Psoas muscle (tissue), 8 donors: ENCODE measurements at regions of chr10 and their contacts with region 1.

Region 1: GRCh38 chr10:79400146-79401004 is 45.0 kb downstream of the ZCCHC24 start:
- DNase-seq: peak; percentile 51 to 74
- ATAC-seq: peak in 2 of 4 donors; percentile 29 to 34
- H3K4me3 ChIP-seq: peak overlapping the region; percentile 22
- H3K27ac ChIP-seq: peak overlapping the region; percentile 86
- H3K4me1 ChIP-seq: peaks cover 98% of the 10 kb centered on the region
- H3K27me3 ChIP-seq: no peaks in the 10 kb centered on the region
- CTCF ChIP-seq: peak; percentile 61

Region 2: DNA sequence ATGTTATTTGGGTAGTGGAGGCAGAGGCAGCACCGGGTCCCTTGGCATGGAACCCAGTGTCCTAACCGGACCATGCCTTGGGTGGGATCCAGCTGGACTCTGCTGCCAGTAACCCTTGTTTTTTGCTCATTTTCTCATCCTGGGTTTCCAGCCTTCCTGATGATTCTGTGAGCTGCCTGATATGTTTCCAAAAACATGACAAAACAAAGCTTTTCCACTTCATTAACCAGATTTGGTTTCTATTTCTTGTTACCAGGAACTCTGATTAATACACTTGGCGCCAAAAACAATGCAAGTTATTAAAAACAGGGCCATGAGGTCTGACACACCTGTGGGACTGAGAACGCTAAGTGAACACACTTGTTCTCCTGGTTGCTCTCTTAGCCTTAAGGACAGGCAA is 1441.0 kb before region 1 on chr10:
- intact Hi-C with region 1: no loop called
- DNase-seq: no peak
- ATAC-seq: no peak
- H3K4me3 ChIP-seq: no peak overlapping the region
- H3K27ac ChIP-seq: no peak overlapping the region
- H3K4me1 ChIP-seq: no peaks in the 10 kb centered on the region
- H3K27me3 ChIP-seq: no peaks in the 10 kb centered on the region
- CTCF ChIP-seq: no peak

Region 3: DNA sequence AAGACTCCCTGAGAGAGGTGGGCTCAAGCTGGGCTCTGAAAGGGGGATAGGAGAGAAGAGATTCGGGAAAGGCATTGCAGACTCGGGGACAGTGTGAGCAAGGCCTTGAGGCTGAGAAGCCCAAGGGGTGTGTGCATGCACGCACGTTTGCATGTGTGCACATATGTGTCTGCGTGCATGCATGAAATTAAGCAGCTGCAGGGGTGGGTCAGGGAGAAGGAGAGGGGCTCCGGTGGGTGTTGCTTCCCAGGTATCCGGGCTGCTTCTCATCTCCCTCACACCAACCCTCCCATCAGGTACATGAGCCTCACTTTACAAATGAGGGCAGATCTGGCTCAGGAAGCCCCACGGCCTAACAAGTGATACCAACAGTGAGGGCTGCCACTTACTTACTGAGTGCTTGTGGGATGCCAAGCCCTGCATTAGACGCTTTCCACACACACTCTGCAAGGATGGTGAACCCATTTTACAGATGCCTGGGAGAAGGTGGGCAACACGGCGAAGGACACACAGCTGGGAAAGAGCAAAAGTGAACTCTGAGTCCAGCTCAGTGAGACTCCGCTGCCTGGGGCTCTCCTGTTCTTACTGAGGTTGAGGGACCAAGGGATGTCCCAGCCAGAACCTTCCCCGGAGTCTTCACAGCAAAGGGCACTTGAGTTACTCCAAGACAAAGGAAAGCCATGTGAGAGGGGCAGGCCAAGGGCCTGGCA is 18.7 kb after region 1 on chr10:
- intact Hi-C with region 1: loop called in 1 of 2 experiments (anchors 1 kb)
- DNase-seq: peak in 1 of 2 donors; percentile 17
- ATAC-seq: no peak
- H3K4me3 ChIP-seq: no peak overlapping the region
- H3K27ac ChIP-seq: no peak overlapping the region
- H3K4me1 ChIP-seq: peaks cover 67% of the 10 kb centered on the region
- H3K27me3 ChIP-seq: no peaks in the 10 kb centered on the region
- CTCF ChIP-seq: no peak

Region 4: DNA sequence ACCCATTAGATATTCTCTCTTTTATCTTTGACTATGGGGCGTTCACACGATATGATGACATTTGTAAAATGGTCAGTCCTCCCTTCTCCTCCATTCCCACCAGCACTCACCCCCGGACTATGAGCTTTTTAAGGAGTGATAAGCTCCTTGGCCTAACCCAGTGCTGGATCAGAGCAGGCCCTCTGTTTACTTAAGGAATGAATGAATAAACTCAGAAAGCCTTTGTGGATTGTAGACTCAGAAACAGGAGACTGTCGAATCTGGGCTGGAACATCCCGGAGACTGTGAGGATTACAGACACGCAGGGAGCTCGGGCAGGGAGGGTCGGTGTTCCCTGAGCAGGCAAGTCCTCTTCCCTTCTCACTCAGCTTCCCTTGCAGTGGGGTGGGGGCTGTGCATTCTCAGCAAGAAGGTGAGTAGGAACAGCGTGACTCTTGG is 51.8 kb after region 1 on chr10:
- intact Hi-C with region 1: no loop called
- DNase-seq: no peak
- ATAC-seq: no peak
- H3K4me3 ChIP-seq: no peak overlapping the region
- H3K27ac ChIP-seq: no peak overlapping the region
- H3K4me1 ChIP-seq: peaks cover 23% of the 10 kb centered on the region
- H3K27me3 ChIP-seq: no peaks in the 10 kb centered on the region
- CTCF ChIP-seq: no peak

Region 5: GRCh38 chr10:79463578-79464496 is 63.5 kb after region 1 on chr10:
- intact Hi-C with region 1: loop called in 1 of 2 experiments (anchors 1 kb)
- DNase-seq: peak; percentile 60 to 84
- ATAC-seq: peak; percentile 66 to 87 (median 76)
- H3K4me3 ChIP-seq: no peak overlapping the region
- H3K27ac ChIP-seq: peak overlapping the region; percentile 71
- H3K4me1 ChIP-seq: peaks cover 17% of the 10 kb centered on the region
- H3K27me3 ChIP-seq: no peaks in the 10 kb centered on the region
- CTCF ChIP-seq: no peak